ENCODE measurements at regions of chr2 and their contacts with region 1.

Region 1: DNA sequence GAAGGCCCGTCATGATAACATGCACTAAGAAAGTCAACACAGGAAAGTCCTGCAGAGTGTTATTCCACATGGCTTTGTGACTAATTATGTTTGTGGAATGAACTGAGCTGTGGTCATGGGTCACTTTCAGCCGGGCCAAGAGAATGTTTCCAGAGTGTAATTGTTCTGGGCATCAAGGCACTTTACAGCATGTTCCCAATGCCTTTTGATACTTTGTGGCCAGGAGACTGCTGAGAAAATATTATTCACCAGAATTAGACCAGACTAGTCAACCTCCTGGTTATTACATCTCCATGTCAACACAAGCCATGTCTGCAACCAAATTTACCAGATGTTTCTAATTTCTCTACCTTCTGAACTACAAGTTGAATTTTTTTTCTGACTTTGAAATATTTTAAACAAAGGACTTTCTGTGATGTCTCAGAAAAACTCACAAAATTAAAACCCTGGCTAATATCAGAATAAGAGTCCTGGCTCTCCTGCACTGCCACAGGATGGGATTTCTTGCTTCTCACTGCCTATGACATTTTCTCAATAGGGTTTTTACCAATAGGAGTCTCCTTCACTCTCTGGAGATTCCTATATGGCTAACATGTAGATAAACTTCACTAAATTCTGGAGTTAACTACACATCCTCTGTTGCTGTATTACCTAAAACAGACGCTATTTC is 90.6 kb upstream of the WDR75 start:
- DNase-seq: no peak

Region 2: GRCh38 chr2:188751816-188752215 is 598.9 kb before region 1 on chr2:
- intact Hi-C with region 1: loop called in 1 of 2 experiments (anchors 5 kb)
- DNase-seq: no peak

Region 3: DNA sequence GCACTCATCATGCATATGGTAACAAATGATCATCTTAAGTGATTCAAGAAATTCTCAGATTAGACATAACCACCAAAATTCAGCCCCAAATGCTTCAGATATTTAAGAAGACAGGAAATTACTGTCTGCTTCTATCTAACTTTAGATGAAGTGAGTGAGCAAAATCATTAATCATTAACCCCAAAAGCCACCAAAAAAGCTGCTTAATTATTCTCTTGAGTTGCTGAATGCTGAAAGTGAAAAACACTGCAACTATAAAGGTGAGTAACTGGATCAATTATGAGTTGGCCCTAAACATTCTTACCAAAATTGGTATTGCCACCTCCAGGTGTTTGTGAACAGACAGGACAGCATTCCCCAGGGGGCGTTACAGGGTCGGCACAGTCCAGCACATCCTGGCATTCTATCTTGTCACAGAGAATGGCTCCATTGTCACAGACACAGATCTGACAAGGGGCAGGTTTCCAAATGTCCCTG is 240.7 kb before region 1 on chr2:
- intact Hi-C with region 1: no loop called
- DNase-seq: no peak

Region 4: DNA sequence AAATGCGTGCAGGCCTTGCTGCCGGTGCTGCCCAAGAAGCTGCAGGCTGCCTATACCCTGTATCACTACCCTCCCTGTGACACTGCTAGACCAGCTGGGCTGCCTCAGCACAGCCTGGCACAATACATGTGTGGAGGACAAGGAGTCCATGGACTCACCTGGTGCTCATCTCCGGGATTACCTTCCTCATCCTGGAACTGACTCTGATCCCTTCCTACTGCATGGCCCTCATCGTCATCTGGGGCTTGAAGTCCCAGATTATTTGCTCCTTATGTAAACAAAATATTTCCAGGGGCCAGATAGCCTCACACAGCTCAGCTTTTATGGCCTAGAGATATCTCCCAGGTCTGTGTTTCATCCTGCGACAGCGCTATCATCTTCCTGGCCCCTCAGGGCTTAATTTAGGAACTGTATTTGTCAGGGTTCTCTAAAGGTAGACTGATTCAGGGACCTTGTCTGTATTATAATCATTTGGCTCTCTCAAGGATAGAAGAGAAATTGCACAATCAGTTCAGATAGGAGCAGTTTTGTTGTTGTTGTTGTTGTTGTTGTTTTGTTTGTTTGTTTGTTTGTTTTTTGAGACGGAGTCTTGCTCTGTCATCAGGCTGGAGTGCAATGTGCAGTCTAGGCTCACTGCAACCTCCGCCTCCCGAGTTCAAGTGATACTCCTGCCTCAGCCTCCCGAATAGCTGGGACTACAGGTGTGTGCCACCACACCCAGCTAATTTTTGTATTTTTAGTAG is 133.5 kb after region 1 on chr2:
- intact Hi-C with region 1: no loop called
- DNase-seq: no peak